AG04450 (cell line): ENCODE measurements at regions of chr15 and their contacts with region 1.

Region 1: GRCh38 chr15:44584162-44584749 is 47.3 kb downstream of the EIF3J start:
- DNase-seq: no peak
- H3K4me3 ChIP-seq: no peak overlapping the region
- H3K27ac ChIP-seq: no peak overlapping the region
- H3K27me3 ChIP-seq: no peaks in the 10 kb centered on the region
- CTCF ChIP-seq: peak; percentile 29

Region 2: GRCh38 chr15:44545913-44546802 is 38.1 kb before region 1 on chr15:
- CTCF ChIA-PET with region 1: interaction called, 10 read pairs
- POLR2A ChIA-PET with region 1: no interaction called
- DNase-seq: no peak
- H3K4me3 ChIP-seq: no peak overlapping the region
- H3K27ac ChIP-seq: no peak overlapping the region
- H3K27me3 ChIP-seq: no peaks in the 10 kb centered on the region
- CTCF ChIP-seq: peak; percentile 51

Region 3: DNA sequence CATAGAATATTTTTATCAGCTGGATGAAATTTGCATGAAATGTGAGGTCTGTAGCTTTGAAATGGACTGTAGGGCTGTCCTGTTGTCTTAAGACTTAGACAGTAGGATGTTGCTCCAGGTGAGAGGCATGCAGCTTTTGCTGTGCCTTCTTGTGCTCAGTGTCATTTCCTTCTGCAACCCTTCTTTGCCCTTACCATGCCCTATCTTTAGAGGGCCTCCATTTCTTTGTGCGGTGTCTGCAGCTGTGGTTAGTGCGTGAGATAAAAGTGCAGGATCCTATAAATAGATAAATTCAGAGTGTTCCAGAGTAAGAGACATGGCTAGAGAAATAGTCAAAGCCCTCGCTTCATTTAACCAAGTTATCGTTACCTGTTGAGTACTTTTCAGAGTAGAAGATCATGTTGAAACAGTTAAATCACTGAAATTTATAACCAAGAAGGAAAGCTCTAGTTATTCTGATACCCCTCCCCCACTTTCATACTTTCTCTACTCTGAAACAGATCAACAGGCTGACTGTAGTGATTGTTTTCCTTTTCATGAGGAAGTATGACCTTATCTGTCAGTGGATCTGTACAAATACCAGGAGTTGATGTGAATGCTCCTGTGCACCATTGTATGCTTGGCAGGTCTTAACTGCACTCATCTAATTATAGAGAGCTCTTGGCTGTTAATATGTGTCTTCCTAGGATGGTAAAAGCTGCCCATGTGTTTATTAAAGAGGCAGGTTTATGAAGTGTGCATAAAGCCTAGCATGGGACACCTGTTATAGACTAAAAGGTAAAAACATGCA is 29.1 kb before region 1 on chr15:
- CTCF ChIA-PET with region 1: interaction called, 12 read pairs
- POLR2A ChIA-PET with region 1: no interaction called
- DNase-seq: no peak
- H3K4me3 ChIP-seq: no peak overlapping the region
- H3K27ac ChIP-seq: no peak overlapping the region
- H3K27me3 ChIP-seq: no peaks in the 10 kb centered on the region
- CTCF ChIP-seq: no peak

Region 4: GRCh38 chr15:44570361-44570760 is 13.9 kb before region 1 on chr15:
- CTCF ChIA-PET with region 1: interaction called, 38 read pairs
- POLR2A ChIA-PET with region 1: no interaction called
- DNase-seq: no peak
- H3K4me3 ChIP-seq: no peak overlapping the region
- H3K27ac ChIP-seq: no peak overlapping the region
- H3K27me3 ChIP-seq: no peaks in the 10 kb centered on the region
- CTCF ChIP-seq: no peak

Region 5: DNA sequence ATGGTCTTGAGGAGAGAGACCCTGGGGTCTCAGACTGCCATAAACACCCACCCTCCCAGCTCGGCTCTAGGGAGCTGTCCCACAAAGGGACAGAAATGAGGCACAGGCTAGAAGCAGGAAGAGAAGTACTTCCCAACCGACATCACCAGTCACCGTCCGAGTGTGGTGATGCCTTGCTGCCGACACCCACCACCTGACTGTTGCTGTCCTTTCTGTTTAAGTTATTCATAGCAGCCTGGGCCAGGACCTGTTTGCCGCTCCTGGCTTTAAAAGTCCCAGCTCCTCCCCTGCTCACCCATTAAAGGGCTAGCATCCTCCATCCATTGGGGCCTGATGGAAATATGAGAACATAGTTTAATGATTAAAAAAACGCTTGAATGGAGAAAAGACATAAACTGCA is 92.4 kb after region 1 on chr15:
- CTCF ChIA-PET with region 1: no interaction called
- POLR2A ChIA-PET with region 1: no interaction called
- DNase-seq: no peak
- H3K4me3 ChIP-seq: no peak overlapping the region
- H3K27ac ChIP-seq: no peak overlapping the region
- H3K27me3 ChIP-seq: peaks cover 26% of the 10 kb centered on the region
- CTCF ChIP-seq: no peak